ENCODE measurements at regions of chr19 and their contacts with region 1.

Region 1: GRCh38 chr19:33406521-33407139 is 33.1 kb downstream of the CEBPG start:
- DNase-seq: peak; percentile 80
- ATAC-seq: peak; percentile 74 to 79
- H3K4me3 ChIP-seq: no peak overlapping the region
- H3K27ac ChIP-seq: no peak overlapping the region
- H3K4me1 ChIP-seq: peaks cover 30% of the 10 kb centered on the region
- H3K27me3 ChIP-seq: no peaks in the 10 kb centered on the region
- CTCF ChIP-seq: peak; percentile 96

Region 2: DNA sequence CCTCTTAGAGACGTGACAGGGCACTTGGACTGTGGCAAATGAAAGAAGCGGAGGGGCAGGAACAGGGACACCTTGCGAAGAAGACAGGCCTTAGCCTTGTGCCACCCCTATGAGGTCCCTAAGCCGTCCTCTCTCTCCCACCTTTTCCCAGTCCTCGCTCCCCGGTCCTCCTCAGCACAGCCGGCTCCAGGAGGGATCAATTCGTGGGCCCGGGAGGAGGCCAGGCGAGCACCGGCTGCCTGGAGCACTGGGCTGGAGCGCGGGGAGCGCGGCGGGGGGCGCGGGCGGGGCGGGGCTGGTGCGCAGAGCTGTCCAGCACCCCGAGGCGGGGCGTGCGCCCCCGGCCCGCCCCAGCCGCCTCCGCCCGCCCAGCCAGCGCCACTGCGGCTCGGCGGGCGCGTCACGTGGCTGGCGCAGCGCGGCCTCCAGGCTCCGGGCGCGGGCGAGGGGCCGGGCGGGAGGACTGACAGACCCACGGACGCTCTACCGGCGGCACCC is 212.7 kb before region 1 on chr19 and contains the start of gene LRP3:
- intact Hi-C with region 1: no loop called
- DNase-seq: peak; percentile 54
- ATAC-seq: peak; percentile 61 to 69
- H3K4me3 ChIP-seq: peak within 1 kb of the TSS; percentile 60
- H3K27ac ChIP-seq: peak within 1 kb of the TSS; percentile 65
- H3K4me1 ChIP-seq: peaks cover 9% of the 10 kb centered on the region
- H3K27me3 ChIP-seq: peaks cover 10% of the 10 kb centered on the region
- CTCF ChIP-seq: no peak
- total RNA-seq, gene LRP3: 13.8 TPM

Region 3: GRCh38 chr19:33235269-33235995 is 171.2 kb before region 1 on chr19:
- intact Hi-C with region 1: loop called (anchors 5 kb)
- DNase-seq: peak; percentile 90
- ATAC-seq: peak; percentile 79 to 85
- H3K4me3 ChIP-seq: no peak overlapping the region
- H3K27ac ChIP-seq: no peak overlapping the region
- H3K4me1 ChIP-seq: no peaks in the 10 kb centered on the region
- H3K27me3 ChIP-seq: peaks cover 10% of the 10 kb centered on the region
- CTCF ChIP-seq: peak; percentile 93

Region 4: DNA sequence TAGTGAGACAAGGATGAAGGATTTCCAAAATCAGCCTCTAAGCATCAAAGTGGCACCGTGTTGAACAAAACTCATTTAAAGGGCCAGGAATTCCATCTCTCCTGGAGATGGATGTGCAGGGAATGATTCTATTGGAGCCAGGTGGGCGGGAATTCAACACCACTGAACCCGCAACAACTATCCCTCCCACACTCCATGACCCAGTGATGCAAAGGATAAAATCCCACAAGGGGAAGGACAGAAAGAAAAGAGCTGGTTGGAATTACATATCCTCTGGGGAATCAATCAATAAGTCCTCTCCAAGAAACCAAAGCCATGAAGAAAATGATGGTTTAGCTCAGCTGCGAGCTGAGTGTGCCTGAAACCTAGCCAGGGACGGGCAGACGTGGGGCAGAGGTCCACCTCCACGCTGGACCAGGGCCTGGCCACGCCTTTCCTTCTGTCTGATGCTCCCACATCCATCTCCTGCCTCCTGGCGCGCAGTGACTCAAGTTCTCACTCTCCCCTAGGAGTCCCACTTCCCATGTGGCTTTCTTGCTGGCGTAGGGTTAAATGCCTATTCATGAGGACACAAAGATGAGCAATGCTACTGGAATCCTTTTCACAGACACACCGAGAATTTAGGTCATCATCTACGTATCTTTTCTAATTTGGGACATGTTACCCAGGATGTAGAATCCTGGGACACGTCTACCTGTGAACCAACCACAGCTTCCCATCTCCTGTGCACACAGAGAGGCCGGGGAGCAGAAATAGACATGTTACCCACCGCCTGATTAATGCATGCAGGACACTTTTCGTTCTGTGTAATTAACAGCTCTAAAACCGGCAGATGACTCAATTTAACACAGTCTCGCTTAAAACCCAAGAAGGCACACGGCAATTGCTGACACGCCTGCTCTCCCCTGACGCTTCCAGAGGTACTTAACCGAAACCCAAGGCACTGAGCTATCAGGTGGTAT is 66.3 kb after region 1 on chr19:
- intact Hi-C with region 1: no loop called
- DNase-seq: peak; percentile 37
- ATAC-seq: no peak
- H3K4me3 ChIP-seq: no peak overlapping the region
- H3K27ac ChIP-seq: no peak overlapping the region
- H3K4me1 ChIP-seq: no peaks in the 10 kb centered on the region
- H3K27me3 ChIP-seq: no peaks in the 10 kb centered on the region
- CTCF ChIP-seq: no peak